Activated CD4-positive, alpha-beta T cell treated with anti-CD3 and anti-CD28 coated beads, Interleukin-2, amount 10 ng/mL, durations not matched to agents 7 days and 5 days (primary cell): ENCODE measurements at regions of chr3 and their contacts with region 1.

Region 1: DNA sequence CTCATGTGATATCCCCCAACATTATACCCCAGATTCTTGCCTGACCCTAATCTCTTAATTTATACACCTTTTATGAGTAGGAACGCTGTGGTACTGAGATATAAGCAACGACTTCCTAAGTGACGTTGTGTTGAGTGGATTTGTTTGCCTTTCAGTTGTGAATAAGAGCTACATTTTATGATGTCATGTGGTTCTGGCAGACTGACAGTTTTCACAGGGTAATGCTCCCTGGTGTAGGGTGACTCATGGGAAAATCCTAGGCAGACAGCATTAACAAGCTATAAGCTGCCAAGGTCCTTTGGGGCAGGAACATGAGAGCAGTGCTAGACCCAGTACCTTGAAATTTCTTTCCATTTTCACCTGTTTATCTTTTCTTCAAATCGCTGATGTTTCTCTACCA is 11.2 kb downstream of the C3orf52 start:
- DNase-seq: no peak
- H3K4me3 Mint-ChIP-seq: no peak overlapping the region
- H3K27ac Mint-ChIP-seq: no peak overlapping the region
- H3K4me1 Mint-ChIP-seq: peaks cover 16% of the 10 kb centered on the region
- H3K27me3 Mint-ChIP-seq: no peaks in the 10 kb centered on the region

Region 2: DNA sequence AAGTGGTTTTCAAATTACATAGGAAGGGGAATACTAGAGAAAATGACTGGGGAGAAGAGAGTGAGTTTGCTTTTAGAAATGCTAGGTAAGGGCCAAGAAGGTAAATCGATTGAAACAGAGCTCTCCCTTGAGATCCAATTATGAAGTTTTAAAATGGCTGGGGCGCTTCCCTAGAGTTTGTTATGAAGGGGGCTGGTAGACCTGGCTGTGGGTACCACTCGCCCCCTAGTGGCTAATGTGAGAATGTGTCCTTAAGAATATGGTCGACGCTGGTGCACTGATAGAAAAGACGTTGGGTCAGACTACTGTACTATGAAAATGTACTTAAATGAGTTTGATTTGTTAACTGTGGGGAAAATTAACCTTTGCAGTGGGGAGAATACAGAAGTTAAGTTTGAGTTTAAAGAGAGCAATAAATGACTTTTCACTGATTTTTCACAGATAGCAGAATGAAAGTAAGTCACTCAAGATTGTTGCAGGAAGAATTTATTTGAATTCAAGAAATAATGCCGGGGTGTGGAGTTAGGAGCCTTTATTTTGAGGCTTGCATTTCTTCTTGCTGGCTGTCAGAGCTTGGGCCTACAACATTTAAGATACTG is 53.7 kb before region 1 on chr3:
- CTCF ChIA-PET with region 1: no interaction called
- POLR2A ChIA-PET with region 1: no interaction called
- DNase-seq: peak; percentile 63
- H3K4me3 Mint-ChIP-seq: no peak overlapping the region
- H3K27ac Mint-ChIP-seq: no peak overlapping the region
- H3K4me1 Mint-ChIP-seq: no peaks in the 10 kb centered on the region
- H3K27me3 Mint-ChIP-seq: no peaks in the 10 kb centered on the region

Region 3: DNA sequence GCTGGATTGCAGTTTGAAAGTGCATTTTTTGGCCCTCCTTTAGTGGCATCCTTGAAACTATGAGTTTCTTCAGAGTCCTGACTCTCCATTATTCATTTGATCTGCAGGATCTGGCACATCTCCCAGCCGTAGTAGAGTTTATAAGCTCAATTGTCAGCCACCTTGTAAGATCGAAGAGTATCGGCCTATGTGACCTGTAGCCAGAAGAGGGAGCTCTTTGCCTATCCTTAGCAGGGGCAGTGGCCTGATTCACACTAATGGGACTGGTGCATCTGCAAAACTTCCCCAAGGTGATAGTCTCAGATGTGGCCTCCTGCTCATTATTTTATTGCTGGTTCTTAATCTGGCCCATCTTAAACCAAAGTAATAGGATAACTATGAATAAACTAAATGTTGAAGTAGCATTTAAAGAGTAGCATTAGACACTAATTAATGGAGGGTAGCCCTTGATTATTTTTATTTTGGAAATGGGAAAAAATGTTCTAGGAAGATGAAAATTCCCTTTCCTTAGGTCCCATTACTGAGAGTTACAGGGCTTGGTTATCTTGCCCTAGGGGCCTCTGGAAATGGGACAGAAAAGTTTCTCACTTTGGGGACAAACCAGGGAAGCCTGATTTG is 14.5 kb after region 1 on chr3:
- CTCF ChIA-PET with region 1: interaction called, 11 read pairs
- POLR2A ChIA-PET with region 1: no interaction called
- DNase-seq: peak; percentile 79
- H3K4me3 Mint-ChIP-seq: no peak overlapping the region
- H3K27ac Mint-ChIP-seq: peak overlapping the region; percentile 10
- H3K4me1 Mint-ChIP-seq: peaks cover 14% of the 10 kb centered on the region
- H3K27me3 Mint-ChIP-seq: no peaks in the 10 kb centered on the region